Mammary epithelial cell (primary cell): ENCODE measurements at regions of chr6 and their contacts with region 1.

Region 1: GRCh38 chr6:110682460-110682853 is 132.8 kb downstream of the CDK19 start:
- DNase-seq: peak; percentile 68
- H3K4me3 ChIP-seq: no peak overlapping the region
- H3K27ac ChIP-seq: no peak overlapping the region
- H3K4me1 ChIP-seq: peaks cover 3% of the 10 kb centered on the region
- H3K27me3 ChIP-seq: no peaks in the 10 kb centered on the region
- CTCF ChIP-seq: peak; percentile 50 to 75

Region 2: GRCh38 chr6:110815217-110816109 is 133.0 kb after region 1 on chr6 and contains the start of gene CDK19:
- CTCF ChIA-PET with region 1: interaction called, 4 read pairs
- dilution Hi-C with region 1: loop called (anchors 10 kb)
- in situ Hi-C with region 1: no loop called
- intact Hi-C with region 1: loop called (anchors 5 kb)
- DNase-seq: peak; percentile 99
- H3K4me3 ChIP-seq: peak within 1 kb of the TSS; percentile 66 to 97 (median 93)
- H3K27ac ChIP-seq: peak within 1 kb of the TSS; percentile 95
- H3K4me1 ChIP-seq: peaks cover 22% of the 10 kb centered on the region
- H3K27me3 ChIP-seq: no peaks in the 10 kb centered on the region
- CTCF ChIP-seq: no peak
- total RNA-seq, gene CDK19: 8.7 to 8.8 TPM

Region 3: GRCh38 chr6:110944681-110945151 is 262.3 kb after region 1 on chr6:
- CTCF ChIA-PET with region 1: interaction called, 3 read pairs
- dilution Hi-C with region 1: no loop called
- in situ Hi-C with region 1: loop called in 1 of 2 experiments (anchors 5 kb)
- intact Hi-C with region 1: loop called (anchors 1 kb)
- DNase-seq: peak; percentile 96
- H3K4me3 ChIP-seq: no peak overlapping the region
- H3K27ac ChIP-seq: peak overlapping the region; percentile 92
- H3K4me1 ChIP-seq: peaks cover 19% of the 10 kb centered on the region
- H3K27me3 ChIP-seq: no peaks in the 10 kb centered on the region
- CTCF ChIP-seq: no peak

Region 4: DNA sequence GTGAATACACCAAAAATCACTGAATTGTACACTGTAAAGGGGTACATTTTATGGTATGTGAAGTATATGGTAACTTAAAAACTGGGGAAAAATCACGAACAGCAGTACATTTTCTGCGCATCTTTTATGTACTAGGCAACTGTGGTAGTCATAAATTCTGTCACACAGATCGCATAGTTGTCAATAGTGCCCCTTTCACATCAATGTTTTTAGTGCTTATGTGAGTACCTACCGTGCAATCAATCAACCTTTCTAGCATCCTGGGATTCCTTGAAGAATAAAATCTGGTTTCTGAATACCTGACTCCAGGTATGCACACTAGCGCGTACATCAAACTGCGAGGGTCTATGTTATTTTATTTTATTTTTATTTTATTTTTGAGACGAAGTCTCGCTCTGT is 298.7 kb after region 1 on chr6:
- CTCF ChIA-PET with region 1: no interaction called
- dilution Hi-C with region 1: no loop called
- in situ Hi-C with region 1: no loop called
- intact Hi-C with region 1: loop called (anchors 1 kb)
- DNase-seq: no peak
- H3K4me3 ChIP-seq: peak overlapping the region; percentile 55 to 81 (median 79)
- H3K27ac ChIP-seq: peak overlapping the region; percentile 83
- H3K4me1 ChIP-seq: peaks cover 9% of the 10 kb centered on the region
- H3K27me3 ChIP-seq: no peaks in the 10 kb centered on the region
- CTCF ChIP-seq: no peak

Region 5: DNA sequence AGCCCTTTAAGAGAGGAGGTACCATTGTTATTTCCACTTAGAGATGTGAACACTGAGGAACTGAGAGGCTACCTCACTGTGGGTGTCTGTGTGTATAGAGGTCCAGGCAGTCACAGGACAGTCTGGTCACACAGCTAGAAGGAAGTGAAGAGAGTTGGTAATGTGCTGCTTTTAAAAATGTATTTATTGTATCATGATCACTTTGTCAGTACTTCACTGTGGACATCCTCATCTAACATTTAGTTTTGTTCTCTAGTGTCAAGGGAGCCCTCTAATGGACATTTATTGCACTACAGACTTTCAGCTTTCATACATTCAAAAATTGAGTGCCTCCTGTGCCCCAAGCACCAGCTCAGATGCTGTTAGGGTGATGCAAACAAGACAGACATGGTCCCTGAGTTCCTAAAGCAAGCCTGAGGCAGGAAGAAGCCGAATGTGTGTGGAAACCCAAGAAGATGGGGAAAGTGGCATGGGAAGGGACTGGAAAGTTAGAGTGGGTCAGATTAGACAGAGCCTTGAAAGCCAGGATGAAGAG is 527.8 kb after region 1 on chr6:
- CTCF ChIA-PET with region 1: no interaction called
- dilution Hi-C with region 1: no loop called
- in situ Hi-C with region 1: no loop called
- intact Hi-C with region 1: loop called (anchors 5 kb)
- DNase-seq: peak; percentile 57
- H3K4me3 ChIP-seq: no peak overlapping the region
- H3K27ac ChIP-seq: no peak overlapping the region
- H3K4me1 ChIP-seq: no peaks in the 10 kb centered on the region
- H3K27me3 ChIP-seq: no peaks in the 10 kb centered on the region
- CTCF ChIP-seq: peak; percentile 71 to 80